Right ventricle myocardium inferior (tissue), 1 donor: ENCODE measurements at regions of chr17 and their contacts with region 1.

Region 1: GRCh38 chr17:48871551-48872351 is 20.8 kb upstream of the ATP5MC1 start:
- DNase-seq: no peak
- ATAC-seq: peak; percentile 53

Region 2: DNA sequence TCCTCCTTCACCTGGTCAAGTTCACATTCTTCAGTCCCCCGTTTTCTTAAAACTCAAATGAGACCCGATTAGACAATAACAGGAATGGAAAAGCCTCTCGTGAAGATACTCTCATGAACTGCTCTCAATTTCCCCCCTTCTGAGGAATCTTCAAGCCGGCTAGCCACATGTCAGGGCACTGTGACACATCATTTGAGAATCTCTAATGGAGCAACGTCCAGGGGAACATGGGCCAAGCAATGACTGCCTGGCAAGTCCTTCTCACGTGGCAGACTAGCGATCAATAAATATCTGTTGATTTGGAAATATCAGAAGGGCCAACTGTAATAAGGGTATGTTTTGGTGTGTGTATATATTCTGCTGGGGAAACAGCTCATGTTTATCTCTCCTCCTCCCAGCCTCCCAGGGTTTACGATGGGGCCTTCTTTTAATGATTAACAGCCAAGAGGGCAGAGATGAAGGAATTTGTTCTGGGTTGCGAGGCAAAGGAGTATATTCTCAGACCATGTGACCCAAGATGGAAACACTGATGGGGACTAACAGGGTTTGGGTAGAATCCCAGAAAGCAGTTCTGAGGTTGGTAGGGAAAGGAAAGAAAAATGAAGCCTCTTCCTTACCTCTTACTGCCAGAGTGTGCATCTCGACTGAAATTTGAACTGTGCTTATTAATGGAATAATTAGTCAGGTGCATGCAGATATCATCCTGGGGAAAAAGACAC is 76.1 kb before region 1 on chr17:
- intact Hi-C with region 1: no loop called
- DNase-seq: no peak
- ATAC-seq: no peak

Region 3: DNA sequence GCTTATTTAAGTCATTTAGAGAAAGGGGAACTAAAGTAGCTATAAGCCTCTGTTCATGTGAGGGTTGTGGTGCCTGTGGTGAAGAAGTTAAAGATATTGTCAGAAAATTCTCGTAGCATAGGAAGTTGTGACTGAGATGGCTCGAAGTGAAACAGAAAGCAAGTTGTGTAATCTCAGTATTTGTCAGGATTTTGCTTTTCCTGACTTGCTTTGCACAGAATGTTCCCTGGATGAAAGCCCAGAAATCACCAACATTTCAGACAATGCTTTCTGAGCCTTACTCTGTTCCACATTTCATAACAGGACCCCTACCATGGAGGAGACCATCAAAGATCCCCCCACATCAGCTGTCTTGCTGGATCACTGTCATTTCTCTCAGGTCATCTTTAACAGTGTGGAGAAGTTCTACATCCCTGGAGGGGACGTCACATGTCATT is 30.3 kb before region 1 on chr17:
- intact Hi-C with region 1: loop called (anchors 2 kb)
- DNase-seq: no peak
- ATAC-seq: peak; percentile 73

Region 4: GRCh38 chr17:48997083-48997826 is 125.5 kb after region 1 on chr17 and contains the start of gene IGF2BP1:
- intact Hi-C with region 1: no loop called
- DNase-seq: no peak
- ATAC-seq: peak; percentile 39
- total RNA-seq, gene IGF2BP1: not detected